MCF 10A (cell line): ENCODE measurements at regions of chr12 and their contacts with region 1.

Region 1: GRCh38 chr12:22856178-22856577 is 231.2 kb downstream of the ETNK1 start:
- DNase-seq: peak; percentile 48
- H3K4me3 Mint-ChIP-seq: no peak overlapping the region
- H3K27ac Mint-ChIP-seq: no peak overlapping the region
- H3K4me1 Mint-ChIP-seq: peaks cover 26% of the 10 kb centered on the region
- H3K27me3 Mint-ChIP-seq: peaks cover 12% of the 10 kb centered on the region
- CTCF ChIP-seq: peak; percentile 51

Region 2: GRCh38 chr12:22709292-22709691 is 146.9 kb before region 1 on chr12:
- CTCF ChIA-PET with region 1: interaction called, 3 read pairs
- POLR2A ChIA-PET with region 1: no interaction called
- intact Hi-C with region 1: loop called (anchors 2 kb)
- DNase-seq: peak; percentile 38
- H3K4me3 Mint-ChIP-seq: no peak overlapping the region
- H3K27ac Mint-ChIP-seq: no peak overlapping the region
- H3K4me1 Mint-ChIP-seq: no peaks in the 10 kb centered on the region
- H3K27me3 Mint-ChIP-seq: peaks cover 22% of the 10 kb centered on the region
- CTCF ChIP-seq: peak; percentile 38

Region 3: DNA sequence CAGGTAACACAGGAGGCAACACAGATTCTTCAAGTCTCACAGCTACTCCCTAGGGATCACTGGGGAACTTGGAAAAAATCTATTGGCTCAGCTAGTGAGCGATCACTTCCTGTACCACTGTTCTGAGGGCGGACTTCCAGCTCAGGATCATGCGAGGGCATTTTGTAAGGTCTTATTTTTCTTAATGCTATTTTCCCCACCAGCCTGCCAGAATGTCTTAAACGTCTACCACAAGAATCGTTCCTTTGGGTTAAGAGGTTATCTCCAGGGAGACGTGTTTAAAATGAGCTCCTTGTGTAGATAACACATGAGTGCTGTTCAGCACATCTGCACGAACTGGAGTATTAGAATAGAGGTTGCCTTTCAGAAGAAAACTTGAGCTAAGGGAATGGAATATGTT is 68.6 kb before region 1 on chr12:
- CTCF ChIA-PET with region 1: no interaction called
- POLR2A ChIA-PET with region 1: no interaction called
- intact Hi-C with region 1: no loop called
- DNase-seq: no peak
- H3K4me3 Mint-ChIP-seq: no peak overlapping the region
- H3K27ac Mint-ChIP-seq: no peak overlapping the region
- H3K4me1 Mint-ChIP-seq: peaks cover 6% of the 10 kb centered on the region
- H3K27me3 Mint-ChIP-seq: no peaks in the 10 kb centered on the region
- CTCF ChIP-seq: no peak

Region 4: DNA sequence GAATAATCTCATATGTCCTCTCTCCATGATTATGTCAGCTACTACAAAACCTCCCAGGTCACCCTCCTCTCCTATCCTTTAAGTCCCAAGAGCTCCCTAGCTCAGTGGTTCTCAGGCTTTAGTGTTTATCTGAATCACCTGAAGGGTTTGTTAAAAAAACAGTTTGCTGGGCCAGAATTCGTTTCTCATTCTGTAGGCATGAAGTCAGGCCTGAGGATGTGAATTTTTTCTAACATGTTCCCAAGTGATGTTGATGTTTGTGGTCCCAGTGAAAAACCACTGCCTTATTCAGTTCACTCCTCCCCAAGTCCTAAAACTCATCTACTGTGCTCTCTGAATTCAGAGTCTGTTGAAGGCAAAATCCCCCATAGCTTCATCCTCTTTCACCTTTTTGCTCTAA is 10.2 kb after region 1 on chr12:
- CTCF ChIA-PET with region 1: interaction called, 23 read pairs
- POLR2A ChIA-PET with region 1: no interaction called
- intact Hi-C with region 1: no loop called
- DNase-seq: no peak
- H3K4me3 Mint-ChIP-seq: no peak overlapping the region
- H3K27ac Mint-ChIP-seq: no peak overlapping the region
- H3K4me1 Mint-ChIP-seq: no peaks in the 10 kb centered on the region
- H3K27me3 Mint-ChIP-seq: no peaks in the 10 kb centered on the region
- CTCF ChIP-seq: no peak

Region 5: GRCh38 chr12:22981711-22982110 is 125.5 kb after region 1 on chr12:
- CTCF ChIA-PET with region 1: interaction called, 73 read pairs
- POLR2A ChIA-PET with region 1: no interaction called
- intact Hi-C with region 1: loop called (anchors 1 kb)
- DNase-seq: peak; percentile 40
- H3K4me3 Mint-ChIP-seq: no peak overlapping the region
- H3K27ac Mint-ChIP-seq: no peak overlapping the region
- H3K4me1 Mint-ChIP-seq: peaks cover 13% of the 10 kb centered on the region
- H3K27me3 Mint-ChIP-seq: no peaks in the 10 kb centered on the region
- CTCF ChIP-seq: peak; percentile 38

Region 6: DNA sequence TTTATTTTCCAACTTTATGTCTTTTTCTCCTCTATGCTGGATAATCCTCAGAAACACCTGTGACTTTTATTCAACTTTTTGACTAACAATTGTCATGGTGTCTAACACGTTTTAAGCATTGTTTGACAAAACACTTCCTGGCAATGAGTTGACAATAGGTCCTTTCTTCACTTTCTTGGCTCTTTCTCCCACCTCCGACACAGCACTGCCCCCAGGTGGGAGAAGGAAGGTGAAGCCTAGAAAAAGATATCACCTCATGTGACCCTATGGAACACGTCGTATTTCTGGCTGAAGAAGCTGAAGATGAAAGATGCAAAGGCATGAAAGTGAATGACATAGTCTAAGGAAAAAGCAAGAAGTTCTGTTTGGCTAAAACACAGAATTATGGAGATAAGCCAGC is 198.8 kb after region 1 on chr12:
- CTCF ChIA-PET with region 1: interaction called, 68 read pairs
- POLR2A ChIA-PET with region 1: no interaction called
- intact Hi-C with region 1: loop called (anchors 1 kb)
- DNase-seq: peak; percentile 69
- H3K4me3 Mint-ChIP-seq: no peak overlapping the region
- H3K27ac Mint-ChIP-seq: no peak overlapping the region
- H3K4me1 Mint-ChIP-seq: no peaks in the 10 kb centered on the region
- H3K27me3 Mint-ChIP-seq: no peaks in the 10 kb centered on the region
- CTCF ChIP-seq: peak; percentile 48

Region 7: DNA sequence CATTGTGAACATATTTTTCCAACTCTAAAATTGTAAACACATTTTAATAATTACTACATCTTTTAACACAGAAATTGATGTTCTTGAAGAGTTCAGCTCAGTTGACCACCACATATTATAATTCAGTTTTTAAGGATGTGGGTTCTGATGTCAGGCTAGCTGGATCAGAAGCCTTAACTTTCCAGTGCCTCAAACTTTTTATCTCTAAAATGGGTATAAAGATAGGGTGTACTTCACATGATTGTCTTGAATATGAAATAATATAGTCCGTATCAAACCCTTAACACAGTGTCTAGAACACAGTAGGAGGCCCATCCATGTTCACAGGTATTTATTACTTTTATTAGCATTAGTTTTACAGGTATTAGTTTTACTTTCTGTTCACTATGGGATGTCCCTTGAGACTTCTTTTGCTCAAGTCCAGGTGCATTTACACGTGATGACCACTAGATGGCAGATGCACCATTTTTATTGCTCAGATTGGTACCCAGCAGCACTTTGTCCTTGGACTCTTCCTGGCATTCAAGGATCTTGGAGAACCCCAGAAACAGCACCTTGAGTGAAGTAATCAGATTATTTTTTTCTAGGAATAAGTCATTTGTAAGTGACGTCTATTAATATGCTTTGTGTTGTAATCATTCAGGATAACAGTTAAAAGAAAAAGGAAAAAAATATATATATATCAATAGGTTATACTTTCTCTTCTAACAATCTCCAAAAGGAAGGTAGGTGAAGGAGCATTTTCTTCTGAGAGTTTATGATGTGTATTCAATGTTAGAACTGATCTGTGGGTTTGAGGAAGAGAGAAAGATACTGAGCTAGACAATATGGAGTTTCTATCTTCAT is 349.0 kb after region 1 on chr12:
- CTCF ChIA-PET with region 1: interaction called, 4 read pairs
- POLR2A ChIA-PET with region 1: no interaction called
- intact Hi-C with region 1: loop called (anchors 5 kb)
- DNase-seq: peak; percentile 58
- H3K4me3 Mint-ChIP-seq: no peak overlapping the region
- H3K27ac Mint-ChIP-seq: no peak overlapping the region
- H3K4me1 Mint-ChIP-seq: peaks cover 9% of the 10 kb centered on the region
- H3K27me3 Mint-ChIP-seq: peaks cover 37% of the 10 kb centered on the region
- CTCF ChIP-seq: peak; percentile 84